A549 (cell line): ENCODE measurements at regions of chr1 and their contacts with region 1.

Region 1: GRCh38 chr1:110312188-110313121 is 26.7 kb upstream of the RBM15 start:
- DNase-seq: peak; percentile 42 to 69
- ATAC-seq: peak; percentile 97 to 100
- H3K4me3 ChIP-seq: no peak overlapping the region
- H3K27ac ChIP-seq: no peak overlapping the region
- H3K4me1 ChIP-seq: no peaks in the 10 kb centered on the region
- CTCF ChIP-seq: peak; percentile 82
- EP300 ChIP-seq: no peak
- POLR2A ChIP-seq: no peak
- RAD21 ChIP-seq: peak; percentile 95

Region 2: GRCh38 chr1:110160538-110161100 is 151.8 kb before region 1 on chr1:
- CTCF ChIA-PET with region 1: no interaction called
- POLR2A ChIA-PET with region 1: no interaction called
- DNase-seq: no peak
- ATAC-seq: no peak
- H3K4me3 ChIP-seq: no peak overlapping the region
- H3K27ac ChIP-seq: no peak overlapping the region
- H3K4me1 ChIP-seq: no peaks in the 10 kb centered on the region
- CTCF ChIP-seq: no peak
- EP300 ChIP-seq: no peak
- POLR2A ChIP-seq: no peak
- RAD21 ChIP-seq: no peak

Region 3: DNA sequence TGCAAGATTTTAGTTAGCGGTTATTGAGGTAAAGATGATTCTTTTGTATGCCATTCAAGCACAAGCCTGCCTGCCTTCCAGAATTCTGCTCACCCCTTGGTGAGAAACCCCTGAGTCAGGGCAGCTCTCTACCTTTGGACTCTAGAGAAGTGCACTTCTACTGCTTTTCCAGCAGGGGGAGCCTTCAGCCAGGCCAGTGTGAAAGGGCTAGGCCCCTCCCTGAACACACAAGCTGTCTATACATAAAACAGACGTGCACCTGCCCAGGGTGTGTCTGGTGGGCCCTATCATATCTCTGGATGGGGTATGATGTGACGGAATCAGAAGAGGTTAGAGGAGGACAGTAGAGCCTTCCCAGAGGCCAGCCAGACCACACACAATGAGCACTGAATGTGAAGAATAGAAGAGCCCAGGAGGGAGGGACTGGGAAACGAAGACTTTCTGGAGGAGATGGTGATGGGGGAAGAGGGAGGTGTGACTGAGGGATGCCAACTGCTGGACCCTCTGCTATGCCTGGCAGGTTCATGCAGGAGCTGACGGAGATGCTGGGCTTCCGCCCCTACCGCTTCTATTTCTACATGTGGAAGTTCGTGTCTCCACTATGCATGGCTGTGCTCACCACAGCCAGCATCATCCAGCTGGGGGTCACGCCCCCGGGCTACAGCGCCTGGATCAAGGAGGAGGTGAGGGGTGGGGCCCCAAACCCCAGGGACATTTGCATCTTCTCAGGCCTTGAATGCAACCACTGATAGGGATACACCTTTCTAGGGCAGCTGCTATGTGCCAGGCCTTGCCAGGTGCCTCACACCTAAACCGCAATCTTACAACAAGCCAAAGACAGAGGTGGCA is 115.3 kb before region 1 on chr1:
- CTCF ChIA-PET with region 1: interaction called, 354 read pairs
- POLR2A ChIA-PET with region 1: no interaction called
- DNase-seq: peak; percentile 50 to 77
- ATAC-seq: peak; percentile 83 to 96
- H3K4me3 ChIP-seq: no peak overlapping the region
- H3K27ac ChIP-seq: no peak overlapping the region
- H3K4me1 ChIP-seq: no peaks in the 10 kb centered on the region
- CTCF ChIP-seq: peak; percentile 65
- EP300 ChIP-seq: no peak
- POLR2A ChIP-seq: no peak
- RAD21 ChIP-seq: peak; percentile 51 to 62

Region 4: GRCh38 chr1:110245876-110246620 is 66.4 kb before region 1 on chr1:
- CTCF ChIA-PET with region 1: interaction called, 11 read pairs
- POLR2A ChIA-PET with region 1: no interaction called
- DNase-seq: no peak
- ATAC-seq: no peak
- H3K4me3 ChIP-seq: no peak overlapping the region
- H3K27ac ChIP-seq: no peak overlapping the region
- H3K4me1 ChIP-seq: no peaks in the 10 kb centered on the region
- CTCF ChIP-seq: no peak
- EP300 ChIP-seq: no peak
- POLR2A ChIP-seq: no peak
- RAD21 ChIP-seq: no peak

Region 5: DNA sequence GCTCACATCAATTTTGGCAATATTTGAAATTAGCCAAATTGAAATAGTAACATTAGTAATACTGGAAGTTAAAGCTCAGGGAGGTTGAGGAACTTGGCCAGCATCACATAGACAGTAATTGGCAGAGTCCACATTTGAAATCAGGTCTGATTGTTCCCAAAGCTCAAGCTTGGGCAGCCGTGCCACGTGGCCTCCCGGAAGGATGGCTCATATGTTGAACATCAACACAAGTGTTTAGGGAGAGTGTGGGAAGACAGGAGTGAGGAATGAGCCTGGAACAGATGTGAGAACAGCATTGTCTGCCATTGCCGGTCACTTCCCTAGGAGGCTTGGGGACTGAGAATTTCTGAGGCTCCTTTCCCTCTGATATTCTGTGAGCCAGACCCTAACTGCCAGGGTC is 13.5 kb before region 1 on chr1:
- CTCF ChIA-PET with region 1: interaction called, 26 read pairs
- POLR2A ChIA-PET with region 1: no interaction called
- DNase-seq: no peak
- ATAC-seq: no peak
- H3K4me3 ChIP-seq: no peak overlapping the region
- H3K27ac ChIP-seq: no peak overlapping the region
- H3K4me1 ChIP-seq: no peaks in the 10 kb centered on the region
- CTCF ChIP-seq: no peak
- EP300 ChIP-seq: no peak
- POLR2A ChIP-seq: no peak
- RAD21 ChIP-seq: no peak

Region 6: GRCh38 chr1:110338886-110339406 is 26.5 kb after region 1 on chr1 and contains the start of gene RBM15:
- CTCF ChIA-PET with region 1: interaction called, 29 read pairs
- POLR2A ChIA-PET with region 1: interaction called, 3 read pairs
- DNase-seq: peak; percentile 89 to 100
- ATAC-seq: peak; percentile 75 to 87
- H3K4me3 ChIP-seq: peak within 1 kb of the TSS; percentile 91
- H3K27ac ChIP-seq: peak within 1 kb of the TSS; percentile 96 to 99
- H3K4me1 ChIP-seq: peaks cover 58% of the 10 kb centered on the region
- CTCF ChIP-seq: no peak
- EP300 ChIP-seq: no peak
- POLR2A ChIP-seq: no peak
- RAD21 ChIP-seq: no peak
- polyA plus RNA-seq, gene RBM15: 14.0 and 15.0 TPM in 2 replicates

Region 7: GRCh38 chr1:110355321-110355720 is 42.9 kb after region 1 on chr1:
- CTCF ChIA-PET with region 1: no interaction called
- POLR2A ChIA-PET with region 1: no interaction called
- DNase-seq: no peak
- ATAC-seq: no peak
- H3K4me3 ChIP-seq: no peak overlapping the region
- H3K27ac ChIP-seq: no peak overlapping the region
- H3K4me1 ChIP-seq: peaks cover 29% of the 10 kb centered on the region
- CTCF ChIP-seq: no peak
- EP300 ChIP-seq: no peak
- POLR2A ChIP-seq: no peak
- RAD21 ChIP-seq: no peak